ENCODE measurements at regions of chr2 and their contacts with region 1.

Region 1: GRCh38 chr2:25228848-25229278 is 60.5 kb upstream of the POMC start:
- DNase-seq: peak; percentile 41
- H3K4me3 ChIP-seq: no peak overlapping the region
- H3K27ac ChIP-seq: peak overlapping the region; percentile 68
- H3K27me3 ChIP-seq: no peaks in the 10 kb centered on the region
- CTCF ChIP-seq: peak; percentile 80

Region 2: DNA sequence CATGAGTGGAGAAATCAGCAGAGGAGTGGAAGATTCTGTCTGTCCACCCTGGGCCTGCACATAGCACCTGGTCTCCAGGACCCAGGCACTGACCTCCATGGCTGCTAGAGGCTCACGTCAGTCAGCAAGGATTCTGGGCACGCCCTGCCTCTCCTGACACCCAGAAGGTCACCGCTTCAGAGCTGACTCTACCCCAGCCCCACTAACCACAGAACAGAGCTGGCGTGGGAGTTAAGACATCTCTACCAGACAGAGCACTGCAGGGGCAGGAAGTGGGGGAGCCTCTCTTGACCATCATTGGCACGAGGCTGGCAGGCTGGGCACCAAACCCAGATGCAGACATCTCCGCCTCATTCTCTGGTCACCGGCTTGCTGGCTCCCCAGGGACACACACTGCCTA is 311.8 kb before region 1 on chr2:
- CTCF ChIA-PET with region 1: no interaction called
- POLR2A ChIA-PET with region 1: no interaction called
- DNase-seq: no peak
- H3K4me3 ChIP-seq: no peak overlapping the region
- H3K27ac ChIP-seq: no peak overlapping the region
- H3K27me3 ChIP-seq: no peaks in the 10 kb centered on the region
- CTCF ChIP-seq: no peak

Region 3: GRCh38 chr2:25243995-25244394 is 15.1 kb after region 1 on chr2:
- CTCF ChIA-PET with region 1: interaction called, 15 read pairs
- POLR2A ChIA-PET with region 1: interaction called, 3 read pairs
- DNase-seq: no peak
- H3K4me3 ChIP-seq: no peak overlapping the region
- H3K27ac ChIP-seq: no peak overlapping the region
- H3K27me3 ChIP-seq: no peaks in the 10 kb centered on the region
- CTCF ChIP-seq: no peak

Region 4: GRCh38 chr2:25252281-25253105 is 23.6 kb after region 1 on chr2:
- CTCF ChIA-PET with region 1: interaction called, 11 read pairs
- POLR2A ChIA-PET with region 1: interaction called, 3 read pairs
- DNase-seq: no peak
- H3K4me3 ChIP-seq: peak overlapping the region; percentile 41; the same call in 1 of the 2 replicates
- H3K27ac ChIP-seq: peak overlapping the region; percentile 65
- H3K27me3 ChIP-seq: no peaks in the 10 kb centered on the region
- CTCF ChIP-seq: no peak

Region 5: DNA sequence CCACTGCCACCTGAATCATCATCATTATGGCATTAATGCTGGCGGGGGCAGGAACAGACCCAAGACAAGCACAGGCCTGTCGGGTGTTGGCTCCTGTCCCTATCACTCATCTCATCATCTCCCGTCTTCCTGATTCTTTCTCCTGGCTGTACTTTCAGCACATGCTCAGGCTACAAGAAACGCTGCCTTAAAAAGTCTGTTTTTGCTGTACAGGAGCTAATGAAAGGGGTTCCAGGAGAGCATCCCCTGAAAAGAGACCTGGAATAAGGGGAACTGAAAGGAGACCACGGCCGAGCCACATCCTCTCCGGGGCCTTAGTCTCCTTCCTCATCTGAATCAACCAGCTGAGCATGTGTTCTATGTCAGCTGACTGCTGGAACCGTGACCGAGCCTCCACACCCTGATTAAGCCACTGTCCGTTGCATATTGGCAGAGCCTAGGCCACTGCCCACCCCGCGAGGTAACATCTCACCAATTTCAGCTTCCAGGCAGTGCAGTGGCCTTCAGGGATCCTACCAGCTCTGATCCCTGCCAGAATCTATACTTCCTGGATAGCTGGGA is 50.3 kb after region 1 on chr2:
- CTCF ChIA-PET with region 1: interaction called, 3 read pairs
- POLR2A ChIA-PET with region 1: interaction called, 11 read pairs
- DNase-seq: no peak
- H3K4me3 ChIP-seq: no peak overlapping the region
- H3K27ac ChIP-seq: no peak overlapping the region
- H3K27me3 ChIP-seq: no peaks in the 10 kb centered on the region
- CTCF ChIP-seq: no peak

Measured in AG04450 (cell line).